ENCODE measurements at regions of chr5 and their contacts with region 1.

Region 1: GRCh38 chr5:73591102-73591695 is 25.7 kb downstream of the UTP15 start:
- DNase-seq: no peak
- H3K4me3 ChIP-seq: no peak overlapping the region
- H3K27ac ChIP-seq: no peak overlapping the region
- H3K4me1 ChIP-seq: peaks cover 0 to 4% (median 0%) of the 10 kb centered on the region in 3 donors
- H3K27me3 ChIP-seq: no peaks in the 10 kb centered on the region
- CTCF ChIP-seq: peak; percentile 79 to 99 (median 90)
- POLR2A ChIP-seq: no peak

Region 2: DNA sequence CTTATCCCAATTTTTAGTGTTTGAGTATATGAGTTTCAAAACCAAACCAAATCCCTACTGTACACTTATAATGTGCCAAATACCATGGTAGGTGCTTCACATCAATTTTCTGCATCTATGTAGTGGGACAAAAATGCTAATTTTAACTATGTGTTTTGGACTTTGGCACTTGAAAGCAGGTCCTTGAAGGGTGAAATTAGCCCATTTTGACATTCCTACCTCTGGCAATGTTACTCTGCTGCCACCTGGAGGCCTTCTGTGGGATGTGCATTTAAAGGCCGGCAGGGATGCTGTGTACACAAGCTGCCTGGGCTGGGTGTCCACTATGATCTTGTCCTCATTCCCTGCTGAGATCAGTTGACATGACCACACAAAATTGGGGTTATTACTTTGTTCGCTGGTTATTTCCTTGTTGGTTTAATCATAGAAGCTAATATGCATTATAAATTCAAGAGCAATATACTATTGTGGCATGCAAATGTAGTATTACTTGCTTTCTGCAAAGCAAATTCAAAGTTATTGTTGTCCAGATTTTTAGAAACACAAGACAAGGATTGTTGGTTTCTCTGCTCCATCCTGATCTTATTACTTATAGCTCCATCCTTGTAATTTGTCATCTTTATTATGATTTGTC is 201.6 kb after region 1 on chr5:
- intact Hi-C with region 1: loop called (anchors 2 kb)
- DNase-seq: no peak
- H3K4me3 ChIP-seq: no peak overlapping the region
- H3K27ac ChIP-seq: no peak overlapping the region
- H3K4me1 ChIP-seq: peaks cover 0 to 31% (median 9%) of the 10 kb centered on the region in 3 donors
- H3K27me3 ChIP-seq: no peaks in the 10 kb centered on the region
- CTCF ChIP-seq: peak; percentile 77 to 97 (median 94)
- POLR2A ChIP-seq: no peak

Region 3: DNA sequence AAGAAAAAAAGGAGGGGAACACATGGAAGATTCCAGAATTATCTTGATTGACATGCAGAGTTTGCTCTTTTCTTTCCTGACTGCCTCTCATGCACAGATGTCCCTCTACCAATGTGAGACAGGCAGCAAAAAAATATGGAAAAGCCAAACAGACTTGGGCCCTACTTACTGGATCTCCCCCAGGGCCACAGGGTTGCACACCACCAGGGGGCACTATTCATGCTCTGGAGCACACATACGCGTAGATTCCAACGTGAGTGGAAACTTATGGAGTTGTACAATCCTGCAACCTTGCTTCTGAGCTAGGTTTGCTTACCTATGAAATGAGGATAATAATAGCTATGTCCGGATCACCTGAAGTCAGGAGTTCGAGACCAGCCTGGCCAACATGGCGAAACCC is 354.3 kb after region 1 on chr5:
- intact Hi-C with region 1: no loop called
- DNase-seq: no peak
- H3K4me3 ChIP-seq: no peak overlapping the region
- H3K27ac ChIP-seq: no peak overlapping the region
- H3K4me1 ChIP-seq: peaks cover 0 to 4% (median 0%) of the 10 kb centered on the region in 3 donors
- H3K27me3 ChIP-seq: peaks cover 0 to 3% (median 0%) of the 10 kb centered on the region in 4 donors
- CTCF ChIP-seq: no peak
- POLR2A ChIP-seq: no peak